Activated CD8-positive, alpha-beta T cell treated with anti-CD3 and anti-CD28 coated beads for 36 hours (primary cell): ENCODE measurements at regions of chr1 and their contacts with region 1.

Region 1: DNA sequence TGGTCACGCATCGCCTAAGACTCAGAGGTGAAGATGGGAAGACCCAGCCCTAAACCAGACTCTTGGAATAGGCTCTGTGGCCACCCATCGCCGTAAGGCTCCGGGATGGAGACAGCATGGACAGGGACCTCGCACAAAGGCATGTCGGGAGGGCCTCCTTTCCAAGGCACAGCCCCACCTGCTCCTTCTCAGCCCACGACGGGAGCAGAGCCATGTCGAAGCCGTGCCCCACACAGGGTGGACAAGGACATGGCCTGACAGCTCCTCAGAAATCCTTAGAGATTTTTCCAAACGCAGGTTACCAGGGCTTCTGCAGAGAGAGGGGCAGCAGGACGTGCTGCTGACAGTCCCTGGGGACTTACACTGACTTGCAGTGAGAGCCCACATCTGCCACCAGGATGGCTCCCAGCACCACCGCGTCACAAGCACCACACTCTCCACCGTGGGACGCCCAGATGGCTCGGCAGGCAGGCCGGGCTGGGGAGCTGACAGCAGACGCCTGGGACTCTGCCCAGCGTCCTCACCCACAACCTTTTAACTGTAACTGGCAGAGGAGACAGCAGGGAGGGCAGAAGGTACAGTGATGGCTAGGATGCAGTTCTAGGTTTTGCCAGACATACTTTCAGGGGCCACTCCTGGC is 12.0 kb downstream of the SSU72 start:
- DNase-seq: no peak
- ATAC-seq: no peak
- H3K4me3 Mint-ChIP-seq: no peak overlapping the region
- H3K27ac Mint-ChIP-seq: no peak overlapping the region
- H3K4me1 Mint-ChIP-seq: peaks cover 17% of the 10 kb centered on the region
- H3K27me3 Mint-ChIP-seq: no peaks in the 10 kb centered on the region
- CTCF ChIP-seq: no peak

Region 2: DNA sequence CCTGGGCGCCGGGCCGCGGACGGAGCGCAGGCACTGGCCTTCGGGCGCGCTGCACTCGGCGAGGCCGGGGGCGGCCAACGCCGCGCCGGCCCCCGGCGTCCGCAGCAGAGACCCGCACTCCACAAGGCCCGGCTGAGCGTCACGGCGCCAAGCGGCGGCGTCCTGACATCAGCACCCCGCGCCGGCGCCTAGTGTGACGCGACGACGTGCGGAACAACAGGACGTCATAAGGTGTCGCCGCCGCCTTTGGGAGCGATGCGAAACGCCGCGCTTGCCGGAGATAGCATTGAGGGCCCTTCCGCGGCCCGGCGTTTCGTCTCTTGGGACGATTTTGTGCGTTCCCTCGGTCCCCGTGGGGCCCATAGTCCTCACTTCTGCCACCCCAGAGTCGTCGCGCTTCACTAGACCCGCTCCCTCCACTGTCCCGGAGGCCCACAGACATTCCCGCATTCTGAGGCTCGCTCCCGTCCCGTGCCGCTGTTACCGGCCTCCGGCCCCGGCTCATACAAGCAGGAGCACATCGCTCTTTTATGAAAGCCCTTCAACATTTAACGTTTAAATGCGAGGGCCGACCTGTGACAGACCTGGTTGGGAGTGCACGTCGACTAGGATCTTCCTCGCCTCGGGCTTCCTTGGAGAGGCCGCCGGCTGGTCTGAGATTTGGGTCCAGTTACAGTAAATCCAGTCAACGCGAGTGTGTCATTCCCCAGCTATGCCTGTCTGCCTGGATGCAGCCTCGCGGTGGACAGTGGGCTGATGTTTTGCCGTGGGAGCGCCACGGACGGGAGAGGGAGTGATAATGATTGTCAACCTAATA is 12.3 kb after region 1 on chr1 and contains the start of gene SSU72:
- CTCF ChIA-PET with region 1: interaction called, 3 read pairs
- POLR2A ChIA-PET with region 1: interaction called, 10 read pairs
- intact Hi-C with region 1: no loop called
- DNase-seq: peak; percentile 96
- ATAC-seq: peak; percentile 87
- H3K4me3 Mint-ChIP-seq: peak within 1 kb of the TSS; percentile 99
- H3K27ac Mint-ChIP-seq: peak within 1 kb of the TSS; percentile 100
- H3K4me1 Mint-ChIP-seq: peaks cover 27% of the 10 kb centered on the region
- H3K27me3 Mint-ChIP-seq: no peaks in the 10 kb centered on the region
- CTCF ChIP-seq: no peak
- total RNA-seq, gene SSU72: 111 to 113 TPM